ENCODE measurements at regions of chr1 and their contacts with region 1.

Region 1: GRCh38 chr1:182249201-182249676 is 142.4 kb downstream of the GLUL start:
- DNase-seq: no peak
- ATAC-seq: no peak
- H3K4me3 ChIP-seq: no peak overlapping the region
- H3K27ac ChIP-seq: no peak overlapping the region
- H3K4me1 ChIP-seq: no peaks in the 10 kb centered on the region
- H3K27me3 ChIP-seq: no peaks in the 10 kb centered on the region
- CTCF ChIP-seq: no peak
- POLR2A ChIP-seq: no peak
- RAD21 ChIP-seq: no peak

Region 2: DNA sequence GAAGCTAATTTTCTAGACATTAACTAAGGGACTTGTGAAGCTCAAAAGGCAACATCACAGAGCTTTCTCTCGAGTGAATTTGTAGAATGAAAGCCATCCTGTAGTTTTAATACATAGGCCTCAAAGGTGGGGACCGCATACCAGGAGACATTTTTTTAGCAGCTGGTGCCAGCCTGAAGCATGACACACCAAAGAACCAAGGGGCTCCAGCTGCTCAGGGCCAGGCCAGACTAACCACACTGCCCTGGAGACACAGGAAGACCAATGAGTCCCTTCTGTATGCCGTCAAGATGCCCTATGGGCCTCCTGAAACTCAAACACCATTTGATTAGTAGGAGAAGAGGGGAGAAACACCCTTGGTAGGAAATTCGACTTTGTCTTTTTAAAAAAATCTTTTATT is 879.8 kb before region 1 on chr1:
- CTCF ChIA-PET with region 1: no interaction called
- POLR2A ChIA-PET with region 1: no interaction called
- RAD21 ChIA-PET with region 1: no interaction called
- intact Hi-C with region 1: no loop called
- DNase-seq: no peak
- ATAC-seq: no peak
- H3K4me3 ChIP-seq: no peak overlapping the region
- H3K27ac ChIP-seq: no peak overlapping the region
- H3K4me1 ChIP-seq: no peaks in the 10 kb centered on the region
- H3K27me3 ChIP-seq: no peaks in the 10 kb centered on the region
- CTCF ChIP-seq: no peak
- POLR2A ChIP-seq: no peak
- RAD21 ChIP-seq: no peak

Region 3: GRCh38 chr1:182299728-182300616 is 50.7 kb after region 1 on chr1:
- CTCF ChIA-PET with region 1: no interaction called
- POLR2A ChIA-PET with region 1: no interaction called
- RAD21 ChIA-PET with region 1: no interaction called
- intact Hi-C with region 1: loop called (anchors 1 kb)
- DNase-seq: no peak
- ATAC-seq: no peak
- H3K4me3 ChIP-seq: no peak overlapping the region
- H3K27ac ChIP-seq: no peak overlapping the region
- H3K4me1 ChIP-seq: peaks cover 0 to 5% of the 10 kb centered on the region in 2 experiments; a peak in 1 of 4 replicates
- H3K27me3 ChIP-seq: no peaks in the 10 kb centered on the region
- CTCF ChIP-seq: no peak
- POLR2A ChIP-seq: no peak
- RAD21 ChIP-seq: no peak

Region 4: GRCh38 chr1:182515556-182515955 is 266.3 kb after region 1 on chr1:
- CTCF ChIA-PET with region 1: no interaction called
- POLR2A ChIA-PET with region 1: no interaction called
- RAD21 ChIA-PET with region 1: no interaction called
- intact Hi-C with region 1: no loop called
- DNase-seq: no peak
- ATAC-seq: no peak
- H3K4me3 ChIP-seq: no peak overlapping the region
- H3K27ac ChIP-seq: no peak overlapping the region
- H3K4me1 ChIP-seq: no peaks in the 10 kb centered on the region
- H3K27me3 ChIP-seq: no peaks in the 10 kb centered on the region
- CTCF ChIP-seq: no peak
- POLR2A ChIP-seq: no peak
- RAD21 ChIP-seq: no peak

Measured in HCT116 (cell line).